K562 (cell line): ENCODE measurements at regions of chr14 and their contacts with region 1.

Region 1: DNA sequence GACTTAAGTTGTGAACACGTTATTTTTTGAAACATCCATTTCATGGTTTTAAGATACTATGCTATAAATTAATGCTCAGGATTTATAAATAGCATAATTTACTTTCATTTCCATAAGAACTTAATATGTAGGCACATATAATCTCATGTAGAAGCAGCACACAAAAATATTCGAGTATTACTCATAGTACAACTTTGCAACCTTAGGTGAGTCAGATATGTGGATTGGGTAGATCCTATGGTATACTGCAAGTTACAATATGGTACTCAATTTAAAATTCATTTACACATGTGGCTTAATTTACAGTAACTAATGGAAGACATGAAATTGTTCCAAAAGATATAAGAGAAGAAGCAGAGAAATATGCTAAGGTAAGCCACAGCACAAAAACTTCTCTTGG is 26.0 kb downstream of the PSMA3 start:
- DNase-seq: no peak
- ATAC-seq: no peak
- H3K4me3 ChIP-seq: no peak overlapping the region
- H3K27ac ChIP-seq: no peak overlapping the region
- H3K4me1 ChIP-seq: no peaks in the 10 kb centered on the region; a peak in 1 of 5 replicates
- H3K27me3 ChIP-seq: no peaks in the 10 kb centered on the region
- CTCF ChIP-seq: no peak
- EP300 ChIP-seq: no peak
- POLR2A ChIP-seq: no peak
- RAD21 ChIP-seq: no peak

Region 2: DNA sequence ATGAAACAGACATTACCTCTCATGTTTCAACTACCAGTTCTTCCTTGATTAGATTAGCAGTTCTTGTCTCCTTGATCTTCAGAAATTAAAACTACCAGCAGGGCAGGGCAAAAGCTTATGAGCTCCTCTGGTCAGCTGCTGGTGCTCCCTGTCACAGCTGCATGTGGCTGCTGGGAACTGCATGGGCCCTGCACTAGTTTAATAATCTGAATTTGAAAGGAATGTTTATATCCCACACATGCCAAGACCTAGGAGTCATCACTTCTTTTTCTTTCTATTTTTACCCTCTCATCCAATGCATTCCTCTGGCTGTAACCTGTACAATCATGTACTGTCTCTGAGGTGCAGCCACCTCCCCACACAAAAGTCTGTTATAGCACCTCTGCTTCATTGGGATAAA is 192.6 kb before region 1 on chr14:
- CTCF ChIA-PET with region 1: no interaction called
- POLR2A ChIA-PET with region 1: no interaction called
- in situ Hi-C with region 1: no loop called
- intact Hi-C with region 1: no loop called
- DNase-seq: no peak
- ATAC-seq: no peak
- H3K4me3 ChIP-seq: no peak overlapping the region
- H3K27ac ChIP-seq: no peak overlapping the region
- H3K4me1 ChIP-seq: no peaks in the 10 kb centered on the region; a peak in 1 of 5 replicates
- H3K27me3 ChIP-seq: no peaks in the 10 kb centered on the region; a peak in 1 of 5 replicates
- CTCF ChIP-seq: no peak
- EP300 ChIP-seq: no peak
- POLR2A ChIP-seq: no peak
- RAD21 ChIP-seq: no peak

Region 3: GRCh38 chr14:58258156-58258555 is 12.5 kb before region 1 on chr14:
- CTCF ChIA-PET with region 1: no interaction called
- POLR2A ChIA-PET with region 1: interaction called, 13 read pairs
- in situ Hi-C with region 1: no loop called
- intact Hi-C with region 1: no loop called
- DNase-seq: no peak
- ATAC-seq: peak; percentile 59; the same call in 2 of the 3 replicates
- H3K4me3 ChIP-seq: no peak overlapping the region
- H3K27ac ChIP-seq: no peak overlapping the region
- H3K4me1 ChIP-seq: no peaks in the 10 kb centered on the region
- H3K27me3 ChIP-seq: no peaks in the 10 kb centered on the region
- CTCF ChIP-seq: no peak
- EP300 ChIP-seq: no peak
- POLR2A ChIP-seq: no peak
- RAD21 ChIP-seq: no peak